ENCODE measurements at regions of chr13 and their contacts with region 1.

Region 1: GRCh38 chr13:77329133-77329910 is 2.4 kb upstream of the MYCBP2 start:
- DNase-seq: peak; percentile 97
- ATAC-seq: peak; percentile 70
- H3K4me3 Mint-ChIP-seq: peak overlapping the region; percentile 81
- H3K27ac Mint-ChIP-seq: peak overlapping the region; percentile 95
- H3K4me1 Mint-ChIP-seq: peaks cover 29% of the 10 kb centered on the region
- H3K27me3 Mint-ChIP-seq: peaks cover 1% of the 10 kb centered on the region
- CTCF ChIP-seq: no peak

Region 2: DNA sequence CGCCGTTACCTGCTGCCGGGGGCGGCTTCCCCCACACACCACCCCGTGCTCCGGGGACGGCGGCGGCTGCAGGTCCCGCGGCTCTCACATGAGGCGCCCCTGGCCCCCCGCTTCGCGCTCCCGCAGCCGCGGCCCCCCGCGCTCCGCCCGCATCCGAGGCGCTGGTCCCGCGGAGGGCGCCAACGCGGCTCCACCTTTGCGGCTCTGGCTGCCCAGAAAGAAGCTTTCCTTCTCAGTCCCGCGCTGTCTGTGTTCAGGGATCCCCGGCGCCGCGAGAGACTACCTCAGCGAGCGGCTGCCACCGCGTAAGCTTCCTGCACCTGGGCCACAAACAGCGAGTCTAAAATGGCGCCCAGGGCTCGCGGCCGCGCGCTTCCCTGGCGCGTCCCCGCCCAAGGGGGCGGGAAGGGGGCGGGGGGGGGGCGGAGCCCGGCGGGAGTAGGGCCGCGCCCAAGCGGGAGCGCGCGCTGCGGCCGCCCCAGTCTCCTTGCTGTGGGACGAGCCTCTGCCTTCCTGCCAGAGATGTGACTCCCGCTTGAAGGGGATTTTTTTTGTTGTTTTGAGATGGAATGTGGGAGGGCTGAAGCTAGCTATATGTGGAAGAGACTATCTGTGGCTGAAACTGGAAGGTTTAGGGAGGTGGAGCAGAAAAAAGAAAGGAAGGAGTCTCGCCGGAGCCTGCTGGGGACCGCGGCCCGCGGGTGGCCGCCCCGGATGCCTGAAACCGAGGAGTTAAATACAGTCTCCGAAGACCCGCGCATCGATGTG is 302.3 kb before region 1 on chr13 and contains the start of gene FBXL3:
- CTCF ChIA-PET with region 1: no interaction called
- POLR2A ChIA-PET with region 1: interaction called, 10 read pairs
- intact Hi-C with region 1: loop called (anchors 10 kb)
- DNase-seq: peak; percentile 83
- ATAC-seq: peak; percentile 57
- H3K4me3 Mint-ChIP-seq: peak within 1 kb of the TSS; percentile 98
- H3K27ac Mint-ChIP-seq: peak within 1 kb of the TSS; percentile 94
- H3K4me1 Mint-ChIP-seq: peaks cover 43% of the 10 kb centered on the region
- H3K27me3 Mint-ChIP-seq: no peaks in the 10 kb centered on the region
- CTCF ChIP-seq: no peak
- total RNA-seq, gene FBXL3: 32.8 to 34.3 TPM

Region 3: GRCh38 chr13:77176350-77176749 is 153.0 kb before region 1 on chr13:
- CTCF ChIA-PET with region 1: no interaction called
- POLR2A ChIA-PET with region 1: no interaction called
- intact Hi-C with region 1: no loop called
- DNase-seq: no peak
- ATAC-seq: no peak
- H3K4me3 Mint-ChIP-seq: no peak overlapping the region
- H3K27ac Mint-ChIP-seq: no peak overlapping the region
- H3K4me1 Mint-ChIP-seq: no peaks in the 10 kb centered on the region
- H3K27me3 Mint-ChIP-seq: no peaks in the 10 kb centered on the region
- CTCF ChIP-seq: no peak

Region 4: GRCh38 chr13:77225946-77226345 is 103.4 kb before region 1 on chr13:
- CTCF ChIA-PET with region 1: no interaction called
- POLR2A ChIA-PET with region 1: no interaction called
- intact Hi-C with region 1: no loop called
- DNase-seq: no peak
- ATAC-seq: no peak
- H3K4me3 Mint-ChIP-seq: no peak overlapping the region
- H3K27ac Mint-ChIP-seq: peak overlapping the region; percentile 45
- H3K4me1 Mint-ChIP-seq: peaks cover 30% of the 10 kb centered on the region
- H3K27me3 Mint-ChIP-seq: no peaks in the 10 kb centered on the region
- CTCF ChIP-seq: no peak

Region 5: DNA sequence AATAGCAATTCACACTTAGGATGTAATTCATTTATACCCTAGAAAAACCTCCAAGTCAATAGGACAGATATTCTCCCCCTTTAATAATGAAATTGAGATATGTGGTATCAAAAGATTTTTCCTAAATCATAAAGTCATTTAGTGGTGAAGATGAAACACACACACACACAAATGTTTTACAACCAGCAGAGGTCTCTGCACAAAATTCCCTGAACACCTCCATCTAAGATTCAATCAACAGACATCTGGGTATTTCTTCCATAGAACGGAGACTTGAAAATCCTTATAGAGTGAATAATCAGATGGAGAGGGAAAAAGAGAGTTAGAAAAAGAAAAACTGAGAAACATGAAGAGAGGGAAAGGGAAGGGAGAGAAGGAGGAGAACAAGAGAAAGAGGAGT is 55.2 kb before region 1 on chr13:
- CTCF ChIA-PET with region 1: no interaction called
- POLR2A ChIA-PET with region 1: interaction called, 3 read pairs
- intact Hi-C with region 1: loop called (anchors 5 kb)
- DNase-seq: no peak
- ATAC-seq: no peak
- H3K4me3 Mint-ChIP-seq: no peak overlapping the region
- H3K27ac Mint-ChIP-seq: no peak overlapping the region
- H3K4me1 Mint-ChIP-seq: peaks cover 25% of the 10 kb centered on the region
- H3K27me3 Mint-ChIP-seq: no peaks in the 10 kb centered on the region
- CTCF ChIP-seq: no peak

Region 6: DNA sequence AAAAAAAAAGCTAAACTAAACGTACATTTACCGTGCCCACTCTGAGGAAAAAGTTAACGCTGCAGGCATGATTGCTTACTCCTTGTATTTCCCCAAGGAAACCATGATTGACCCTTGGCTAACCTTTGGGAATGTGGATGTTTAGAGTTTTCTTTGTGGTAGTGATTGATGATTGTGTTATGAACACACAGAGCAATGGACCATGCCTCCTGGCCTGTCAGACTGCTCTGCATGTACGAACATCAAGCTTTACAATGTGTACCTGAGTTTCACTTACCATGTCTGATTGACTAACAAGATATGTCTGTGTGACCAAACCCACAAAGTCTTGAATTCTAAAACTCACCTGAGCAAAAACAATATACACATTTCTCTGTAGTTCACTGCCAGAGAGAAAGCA is 37.5 kb before region 1 on chr13:
- CTCF ChIA-PET with region 1: no interaction called
- POLR2A ChIA-PET with region 1: interaction called, 10 read pairs
- intact Hi-C with region 1: loop called (anchors 5 kb)
- DNase-seq: no peak
- ATAC-seq: no peak
- H3K4me3 Mint-ChIP-seq: no peak overlapping the region
- H3K27ac Mint-ChIP-seq: peak overlapping the region; percentile 81
- H3K4me1 Mint-ChIP-seq: peaks cover 40% of the 10 kb centered on the region
- H3K27me3 Mint-ChIP-seq: no peaks in the 10 kb centered on the region
- CTCF ChIP-seq: no peak

Region 7: DNA sequence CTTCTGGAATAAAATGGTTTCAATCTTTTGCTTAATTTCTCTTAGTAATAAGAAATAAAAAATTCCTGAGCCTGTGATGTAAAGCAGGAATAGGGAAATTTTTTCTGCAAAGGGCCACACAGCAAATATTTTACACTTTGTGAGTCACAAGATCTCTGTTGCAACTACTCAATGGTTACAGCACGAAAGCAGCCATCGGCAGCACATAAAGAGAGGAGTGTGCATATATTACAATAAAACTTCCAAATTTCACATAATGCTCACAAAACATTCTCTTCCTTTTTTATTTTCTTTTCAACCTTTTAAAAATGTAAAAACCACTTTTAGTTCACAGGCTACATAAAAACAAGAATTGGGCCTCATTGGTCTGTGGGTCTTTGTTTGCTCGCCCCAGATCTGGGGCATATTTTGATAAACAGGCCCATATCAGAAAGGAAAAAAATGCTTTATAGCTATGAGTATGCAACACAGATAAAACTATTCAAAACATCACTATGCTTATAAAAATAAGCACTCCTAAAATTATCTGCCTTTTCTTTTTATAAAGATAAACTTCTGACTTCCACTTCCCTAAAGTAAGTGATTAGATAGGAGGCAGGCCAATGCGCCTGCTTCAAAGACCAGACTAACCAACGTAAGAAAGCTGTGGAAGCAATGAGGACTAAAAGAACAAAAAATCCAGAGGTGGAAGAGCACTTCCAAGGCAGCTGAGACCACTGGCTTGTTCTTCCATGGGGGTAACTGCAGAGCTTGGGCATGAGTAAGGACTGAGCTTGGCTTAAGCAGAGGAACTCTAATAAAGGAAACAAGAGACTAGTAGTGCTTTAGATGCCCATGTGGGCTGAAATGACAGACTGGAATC is 28.9 kb before region 1 on chr13:
- CTCF ChIA-PET with region 1: interaction called, 3 read pairs
- POLR2A ChIA-PET with region 1: interaction called, 10 read pairs
- intact Hi-C with region 1: no loop called
- DNase-seq: no peak
- ATAC-seq: no peak
- H3K4me3 Mint-ChIP-seq: no peak overlapping the region
- H3K27ac Mint-ChIP-seq: no peak overlapping the region
- H3K4me1 Mint-ChIP-seq: peaks cover 68% of the 10 kb centered on the region
- H3K27me3 Mint-ChIP-seq: no peaks in the 10 kb centered on the region
- CTCF ChIP-seq: no peak

Region 8: GRCh38 chr13:77429320-77430142 is 100.2 kb after region 1 on chr13:
- CTCF ChIA-PET with region 1: no interaction called
- POLR2A ChIA-PET with region 1: interaction called, 3 read pairs
- intact Hi-C with region 1: loop called (anchors 5 kb)
- DNase-seq: peak; percentile 68
- ATAC-seq: peak; percentile 85
- H3K4me3 Mint-ChIP-seq: no peak overlapping the region
- H3K27ac Mint-ChIP-seq: peak overlapping the region; percentile 76
- H3K4me1 Mint-ChIP-seq: peaks cover 14% of the 10 kb centered on the region
- H3K27me3 Mint-ChIP-seq: peaks cover under 1% of the 10 kb centered on the region
- CTCF ChIP-seq: no peak

Measured in activated CD8-positive, alpha-beta T cell treated with anti-CD3 and anti-CD28 coated beads for 36 hours (primary cell).